ENCODE measurements at regions of chr5 and their contacts with region 1.

Region 1: DNA sequence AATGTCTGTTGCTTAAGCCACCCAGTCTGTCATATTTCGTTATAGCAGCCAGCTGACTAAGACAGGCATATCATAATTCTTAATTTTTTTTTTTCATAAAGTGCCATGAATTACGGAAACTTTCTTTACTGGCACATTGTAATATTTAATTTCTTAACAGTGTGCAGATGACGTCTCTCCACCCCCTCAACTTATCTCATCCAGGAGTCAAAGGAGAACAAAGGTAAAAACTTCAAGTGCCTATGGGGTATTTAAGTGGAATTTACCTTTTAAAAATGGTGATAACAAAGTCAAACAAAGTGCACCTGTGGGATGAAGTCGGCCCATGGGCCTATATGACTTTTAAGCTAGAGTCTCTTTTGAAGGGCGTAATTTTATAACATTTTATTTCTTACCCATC is 539.4 kb downstream of the CDH9 start:
- DNase-seq: no peak
- ATAC-seq: no peak
- H3K4me3 Mint-ChIP-seq: no peak overlapping the region
- H3K27ac Mint-ChIP-seq: no peak overlapping the region
- H3K4me1 Mint-ChIP-seq: no peaks in the 10 kb centered on the region
- H3K27me3 Mint-ChIP-seq: no peaks in the 10 kb centered on the region

Region 2: GRCh38 chr5:25944786-25945185 is 554.2 kb before region 1 on chr5:
- CTCF ChIA-PET with region 1: no interaction called
- POLR2A ChIA-PET with region 1: no interaction called
- intact Hi-C with region 1: no loop called
- DNase-seq: no peak
- ATAC-seq: no peak
- H3K4me3 Mint-ChIP-seq: no peak overlapping the region
- H3K27ac Mint-ChIP-seq: no peak overlapping the region
- H3K4me1 Mint-ChIP-seq: no peaks in the 10 kb centered on the region
- H3K27me3 Mint-ChIP-seq: no peaks in the 10 kb centered on the region

Region 3: DNA sequence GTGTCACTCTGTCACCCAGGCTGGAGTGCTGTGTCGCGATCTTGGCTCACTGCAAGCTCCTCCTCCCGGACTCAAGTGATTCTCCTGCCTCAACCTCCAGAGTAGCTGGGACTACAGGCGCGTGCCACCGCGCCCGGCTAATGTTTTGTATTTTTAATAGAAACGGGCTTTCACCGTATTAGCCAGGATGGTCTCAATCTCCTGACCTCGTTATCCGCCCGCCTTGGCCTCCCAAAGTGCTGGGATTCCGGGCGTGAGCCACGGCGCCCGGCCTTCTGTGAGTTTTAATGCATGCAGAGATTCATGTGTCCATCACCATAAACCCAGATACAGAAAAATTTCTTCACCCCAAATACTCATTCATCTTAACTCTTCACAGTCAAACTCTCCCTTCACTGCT is 507.3 kb before region 1 on chr5:
- CTCF ChIA-PET with region 1: no interaction called
- POLR2A ChIA-PET with region 1: no interaction called
- intact Hi-C with region 1: loop called in 1 of 2 experiments (anchors 10 kb)
- DNase-seq: no peak
- ATAC-seq: no peak
- H3K4me3 Mint-ChIP-seq: no peak overlapping the region
- H3K27ac Mint-ChIP-seq: no peak overlapping the region
- H3K4me1 Mint-ChIP-seq: no peaks in the 10 kb centered on the region
- H3K27me3 Mint-ChIP-seq: no peaks in the 10 kb centered on the region

Region 4: GRCh38 chr5:26406329-26406728 is 92.6 kb before region 1 on chr5:
- CTCF ChIA-PET with region 1: no interaction called
- POLR2A ChIA-PET with region 1: no interaction called
- intact Hi-C with region 1: no loop called
- DNase-seq: no peak
- ATAC-seq: no peak
- H3K4me3 Mint-ChIP-seq: no peak overlapping the region
- H3K27ac Mint-ChIP-seq: no peak overlapping the region
- H3K4me1 Mint-ChIP-seq: no peaks in the 10 kb centered on the region
- H3K27me3 Mint-ChIP-seq: no peaks in the 10 kb centered on the region